ENCODE measurements at regions of chr10 and their contacts with region 1.

Region 1: GRCh38 chr10:99430451-99431189 is at the start of gene GOT1:
- DNase-seq: peak; percentile 98
- H3K4me3 Mint-ChIP-seq: peak within 1 kb of the TSS; percentile 99
- H3K27ac Mint-ChIP-seq: peak within 1 kb of the TSS; percentile 98
- H3K4me1 Mint-ChIP-seq: peaks cover 30% of the 10 kb centered on the region
- H3K27me3 Mint-ChIP-seq: no peaks in the 10 kb centered on the region
- total RNA-seq, gene GOT1: 37.2 and 38.0 TPM in 2 replicates

Region 2: GRCh38 chr10:99395750-99396445 is 34.7 kb before region 1 on chr10:
- intact Hi-C with region 1: loop called (anchors 2 kb)
- DNase-seq: no peak
- H3K4me3 Mint-ChIP-seq: no peak overlapping the region
- H3K27ac Mint-ChIP-seq: peak overlapping the region; percentile 20
- H3K4me1 Mint-ChIP-seq: peaks cover 8% of the 10 kb centered on the region
- H3K27me3 Mint-ChIP-seq: peaks cover 2% of the 10 kb centered on the region